Psoas muscle (tissue), 8 donors: ENCODE measurements at regions of chr11 and their contacts with region 1.

Region 1: DNA sequence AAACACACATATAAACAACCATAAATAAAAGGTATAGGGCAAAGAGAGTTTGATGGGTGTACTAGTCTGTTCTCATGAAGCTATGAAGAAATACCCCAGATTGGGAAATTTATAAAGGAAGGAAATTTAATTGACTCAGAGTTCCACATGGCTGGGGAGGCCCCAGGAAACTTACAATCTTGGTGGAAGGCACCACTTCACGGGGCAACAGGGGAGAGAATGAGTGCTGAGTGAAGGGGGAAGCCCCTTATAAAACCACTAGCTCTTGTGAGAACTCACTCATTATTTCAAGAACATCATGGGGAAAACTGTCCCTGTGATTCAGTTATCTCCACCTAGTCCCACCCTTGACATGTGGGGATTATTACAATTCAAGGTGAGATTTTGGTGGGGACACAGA is 385.9 kb upstream of the ANO5 start:
- DNase-seq: no peak
- ATAC-seq: no peak
- H3K4me3 ChIP-seq: no peak overlapping the region
- H3K27ac ChIP-seq: no peak overlapping the region
- H3K4me1 ChIP-seq: no peaks in the 10 kb centered on the region
- H3K27me3 ChIP-seq: no peaks in the 10 kb centered on the region
- CTCF ChIP-seq: no peak

Region 2: DNA sequence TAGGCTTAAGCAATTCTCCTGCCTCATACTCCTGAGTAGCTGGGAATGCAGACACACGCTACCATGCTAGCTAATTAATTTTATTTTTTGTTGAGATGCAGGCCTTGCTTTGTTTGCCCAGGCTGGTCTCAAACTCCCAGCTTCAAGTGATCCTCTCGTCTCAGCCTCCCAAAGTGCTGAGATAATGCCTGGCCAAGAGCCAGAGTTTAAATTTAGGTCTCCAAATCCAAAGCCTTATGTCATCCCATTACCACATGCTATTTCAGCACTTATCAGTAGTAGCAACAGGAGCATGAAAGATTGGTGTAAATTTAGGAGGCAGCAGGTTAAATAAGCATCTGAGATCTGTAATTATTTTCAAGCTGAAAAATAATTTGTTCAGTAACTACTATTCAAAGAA is 59.8 kb after region 1 on chr11:
- intact Hi-C with region 1: loop called in 1 of 2 experiments (anchors 10 kb)
- DNase-seq: no peak
- ATAC-seq: no peak
- H3K4me3 ChIP-seq: no peak overlapping the region
- H3K27ac ChIP-seq: no peak overlapping the region
- H3K4me1 ChIP-seq: no peaks in the 10 kb centered on the region
- H3K27me3 ChIP-seq: no peaks in the 10 kb centered on the region
- CTCF ChIP-seq: no peak